Right cardiac atrium (tissue), 5 donors: ENCODE measurements at regions of chr4 and their contacts with region 1.

Region 1: DNA sequence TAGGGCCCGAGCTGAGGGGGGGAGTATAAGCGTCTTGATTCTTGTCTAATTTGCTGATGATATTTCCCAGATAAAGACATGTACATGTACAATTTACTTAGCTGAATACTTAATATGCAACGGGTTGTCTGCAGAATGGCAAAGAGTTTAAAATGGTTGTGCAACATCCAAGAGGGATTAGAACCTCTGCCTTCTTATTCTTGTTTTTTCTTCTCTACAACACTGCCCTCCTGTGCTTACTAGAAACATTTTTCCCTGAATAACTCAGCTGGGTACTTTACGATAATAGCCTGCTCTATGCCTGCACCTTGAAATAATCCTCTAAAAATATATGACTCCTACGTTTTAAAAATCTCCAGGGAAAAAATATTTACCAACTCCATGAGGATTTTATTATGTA is 41.8 kb downstream of the INTS12 start:
- DNase-seq: no peak
- ATAC-seq: peak in 1 of 2 donors; percentile 59
- H3K4me3 ChIP-seq: no peak overlapping the region
- H3K27ac ChIP-seq: no peak overlapping the region
- H3K4me1 ChIP-seq: no peaks in the 10 kb centered on the region
- H3K27me3 ChIP-seq: no peaks in the 10 kb centered on the region

Region 2: GRCh38 chr4:105520817-105521790 is 145.6 kb before region 1 on chr4:
- intact Hi-C with region 1: loop called (anchors 2 to 10 kb)
- DNase-seq: no peak
- ATAC-seq: peak; percentile 48 to 55
- H3K4me3 ChIP-seq: no peak overlapping the region
- H3K27ac ChIP-seq: no peak overlapping the region
- H3K4me1 ChIP-seq: no peaks in the 10 kb centered on the region
- H3K27me3 ChIP-seq: no peaks in the 10 kb centered on the region

Region 3: GRCh38 chr4:105715692-105716278 is 49.1 kb after region 1 on chr4:
- intact Hi-C with region 1: no loop called
- DNase-seq: no peak
- ATAC-seq: no peak
- H3K4me3 ChIP-seq: peak overlapping the region; percentile 15
- H3K27ac ChIP-seq: no peak overlapping the region
- H3K4me1 ChIP-seq: no peaks in the 10 kb centered on the region
- H3K27me3 ChIP-seq: no peaks in the 10 kb centered on the region

Region 4: DNA sequence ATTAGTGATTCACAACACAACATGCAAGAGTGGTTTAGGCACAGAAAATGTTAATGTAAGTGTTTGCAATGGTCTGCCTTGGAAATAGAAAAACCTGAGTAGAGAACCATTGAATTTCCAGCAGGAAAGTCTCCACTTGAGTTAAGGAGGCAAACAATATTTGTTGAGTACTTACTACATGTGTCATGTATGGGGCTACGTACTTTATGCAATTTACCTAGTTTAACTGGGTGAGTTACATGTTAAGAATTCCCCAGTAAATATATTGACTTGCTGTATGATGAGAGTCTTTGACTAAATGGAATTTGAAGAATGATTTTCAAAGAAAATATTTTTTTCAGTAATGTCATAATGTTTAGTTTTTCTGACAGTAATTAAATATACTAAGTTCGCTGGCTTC is 220.8 kb after region 1 on chr4:
- intact Hi-C with region 1: no loop called
- DNase-seq: no peak
- ATAC-seq: no peak
- H3K4me3 ChIP-seq: no peak overlapping the region
- H3K27ac ChIP-seq: no peak overlapping the region
- H3K4me1 ChIP-seq: no peaks in the 10 kb centered on the region
- H3K27me3 ChIP-seq: no peaks in the 10 kb centered on the region